Prostate gland (tissue), 2 donors: ENCODE measurements at regions of chr6 and their contacts with region 1.

Region 1: GRCh38 chr6:19024737-19025136 is 637.6 kb downstream of the RNF144B start:
- DNase-seq: peak; percentile 30
- H3K4me3 ChIP-seq: no peak overlapping the region
- H3K27ac ChIP-seq: no peak overlapping the region
- H3K4me1 ChIP-seq: no peaks in the 10 kb centered on the region
- H3K27me3 ChIP-seq: no peaks in the 10 kb centered on the region
- CTCF ChIP-seq: peak in 3 of 4 experiments; percentile 41 to 57 (median 53)
- POLR2A ChIP-seq: no peak

Region 2: DNA sequence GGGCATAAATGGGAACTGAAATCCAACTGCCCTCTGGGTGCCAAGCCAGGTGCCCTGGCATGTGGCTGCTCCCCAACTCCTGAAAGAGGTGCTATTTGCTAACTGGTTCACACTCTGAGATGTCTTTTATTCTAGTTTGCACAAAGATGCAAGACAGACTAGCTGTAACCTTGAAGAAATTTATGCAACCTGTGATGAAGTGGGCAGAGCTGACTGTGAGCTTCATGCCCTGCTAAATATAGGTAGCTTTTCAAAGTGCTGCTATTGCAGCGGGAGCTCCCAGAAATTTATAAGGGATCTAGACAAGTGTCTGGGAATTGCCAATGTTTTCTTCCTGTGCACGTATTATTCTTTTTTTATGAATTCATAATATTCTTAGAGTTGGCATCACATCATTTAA is 120.1 kb before region 1 on chr6:
- intact Hi-C with region 1: no loop called
- DNase-seq: no peak
- H3K4me3 ChIP-seq: no peak overlapping the region
- H3K27ac ChIP-seq: no peak overlapping the region
- H3K4me1 ChIP-seq: no peaks in the 10 kb centered on the region
- H3K27me3 ChIP-seq: no peaks in the 10 kb centered on the region
- CTCF ChIP-seq: no peak
- POLR2A ChIP-seq: no peak

Region 3: DNA sequence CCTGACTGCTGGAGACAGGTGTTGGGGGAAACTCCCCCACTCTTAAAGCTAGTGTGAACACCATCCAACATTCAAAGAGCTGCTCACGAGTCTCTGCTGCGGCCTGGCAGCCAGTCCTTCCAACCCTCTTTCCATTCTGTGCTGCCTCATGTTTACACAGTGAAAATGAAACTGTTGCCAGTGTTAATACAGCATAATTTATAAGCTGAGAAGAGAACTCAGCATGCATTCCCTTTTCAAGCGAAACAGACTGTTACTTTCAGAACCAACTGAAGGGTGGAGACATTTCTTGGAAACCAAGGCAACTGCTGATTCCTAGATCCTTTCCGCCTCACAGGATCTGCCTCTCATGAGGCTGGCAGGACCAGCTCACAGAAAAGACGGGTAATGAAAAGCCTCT is 278.6 kb after region 1 on chr6:
- intact Hi-C with region 1: loop called (anchors 10 kb)
- DNase-seq: peak; percentile 53
- H3K4me3 ChIP-seq: no peak overlapping the region
- H3K27ac ChIP-seq: peak overlapping the region; percentile 32 to 45
- H3K4me1 ChIP-seq: no peaks in the 10 kb centered on the region
- H3K27me3 ChIP-seq: no peaks in the 10 kb centered on the region
- CTCF ChIP-seq: no peak
- POLR2A ChIP-seq: no peak